ENCODE measurements at regions of chr11 and their contacts with region 1.

Region 1: GRCh38 chr11:102614485-102614884 is 10.6 kb downstream of the MMP20 start:
- DNase-seq: no peak
- H3K4me3 Mint-ChIP-seq: no peak overlapping the region
- H3K27ac Mint-ChIP-seq: no peak overlapping the region
- H3K4me1 Mint-ChIP-seq: peaks cover 8% of the 10 kb centered on the region
- H3K27me3 Mint-ChIP-seq: peaks cover 17% of the 10 kb centered on the region

Region 2: GRCh38 chr11:102287964-102288724 is 326.3 kb before region 1 on chr11:
- CTCF ChIA-PET with region 1: interaction called, 54 read pairs
- DNase-seq: peak; percentile 44
- H3K4me3 Mint-ChIP-seq: no peak overlapping the region
- H3K27ac Mint-ChIP-seq: no peak overlapping the region
- H3K4me1 Mint-ChIP-seq: peaks cover 32% of the 10 kb centered on the region
- H3K27me3 Mint-ChIP-seq: peaks cover 4% of the 10 kb centered on the region

Region 3: DNA sequence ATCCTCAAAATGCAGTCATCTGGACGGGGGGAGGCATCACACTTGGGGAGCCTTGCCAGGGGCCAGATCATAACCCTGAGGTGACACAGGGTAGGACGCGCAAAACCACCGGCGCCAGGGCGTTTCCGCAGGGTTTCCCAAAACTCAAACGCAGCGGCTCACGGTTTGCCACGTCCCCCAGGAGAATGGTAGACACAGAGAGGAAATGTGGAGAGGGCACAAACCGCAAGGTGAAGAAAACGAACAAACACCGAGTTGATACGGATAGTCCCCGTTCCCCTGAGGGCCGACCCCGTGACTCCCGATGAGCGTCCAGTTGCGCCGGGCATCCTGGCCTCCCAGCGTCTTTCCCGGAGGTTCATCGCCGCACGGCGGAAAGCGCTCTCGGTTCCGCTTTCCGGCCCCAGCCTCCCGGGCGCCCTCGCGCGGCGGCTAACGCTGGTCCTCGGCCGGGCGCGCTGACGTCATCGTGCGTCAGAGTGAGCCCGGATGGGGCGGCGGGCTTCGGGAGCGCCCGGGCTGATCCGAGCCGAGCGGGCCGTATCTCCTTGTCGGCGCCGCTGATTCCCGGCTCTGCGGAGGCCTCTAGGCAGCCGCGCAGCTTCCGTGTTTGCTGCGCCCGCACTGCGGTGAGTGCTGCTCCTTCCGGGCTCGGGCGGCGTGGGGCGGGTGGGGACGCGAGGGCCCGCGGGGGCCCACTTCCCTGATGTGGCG is 267.6 kb before region 1 on chr11 and contains the start of gene BIRC2:
- CTCF ChIA-PET with region 1: interaction called, 158 read pairs
- DNase-seq: peak; percentile 95
- H3K4me3 Mint-ChIP-seq: peak within 1 kb of the TSS; percentile 98
- H3K27ac Mint-ChIP-seq: peak within 1 kb of the TSS; percentile 96
- H3K4me1 Mint-ChIP-seq: peaks cover 43% of the 10 kb centered on the region
- H3K27me3 Mint-ChIP-seq: no peaks in the 10 kb centered on the region

Region 4: DNA sequence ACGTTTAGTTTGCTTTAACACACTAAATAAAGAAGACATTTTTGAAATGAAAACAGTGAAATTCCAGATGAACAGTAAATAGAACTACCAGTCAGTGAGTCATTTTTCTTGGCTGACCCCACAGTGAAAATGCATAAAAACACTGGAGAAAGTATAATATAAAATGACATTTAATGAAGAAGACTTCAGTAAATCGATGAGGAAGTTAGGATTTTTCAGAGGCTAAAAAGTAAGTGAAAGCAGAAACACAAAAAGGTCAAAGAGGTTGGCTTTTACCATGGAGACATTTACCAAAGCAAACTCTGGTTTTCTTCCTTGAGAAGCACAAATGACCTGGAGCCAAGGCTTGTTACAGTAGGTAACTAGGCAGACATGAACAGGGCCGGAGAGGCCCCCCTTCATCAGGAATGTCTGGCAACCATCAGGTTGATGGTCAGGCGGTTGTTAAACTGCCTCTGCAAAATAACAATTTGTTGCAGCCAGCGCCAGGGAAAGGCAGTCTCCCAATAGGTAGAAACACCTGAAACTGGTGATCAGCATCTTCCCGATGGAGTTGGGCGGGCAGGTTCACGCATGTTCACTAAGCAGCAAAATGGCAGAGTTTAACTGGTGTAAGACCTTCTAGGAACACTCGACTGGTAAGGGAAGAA is 145.2 kb before region 1 on chr11:
- CTCF ChIA-PET with region 1: no interaction called
- DNase-seq: no peak
- H3K4me3 Mint-ChIP-seq: peak overlapping the region; percentile 64
- H3K27ac Mint-ChIP-seq: no peak overlapping the region
- H3K4me1 Mint-ChIP-seq: peaks cover 100% of the 10 kb centered on the region
- H3K27me3 Mint-ChIP-seq: no peaks in the 10 kb centered on the region

Region 5: GRCh38 chr11:102495161-102496042 is 119.1 kb before region 1 on chr11:
- CTCF ChIA-PET with region 1: interaction called, 43 read pairs
- DNase-seq: peak; percentile 44
- H3K4me3 Mint-ChIP-seq: no peak overlapping the region
- H3K27ac Mint-ChIP-seq: no peak overlapping the region
- H3K4me1 Mint-ChIP-seq: peaks cover 19% of the 10 kb centered on the region
- H3K27me3 Mint-ChIP-seq: peaks cover 26% of the 10 kb centered on the region

Region 6: DNA sequence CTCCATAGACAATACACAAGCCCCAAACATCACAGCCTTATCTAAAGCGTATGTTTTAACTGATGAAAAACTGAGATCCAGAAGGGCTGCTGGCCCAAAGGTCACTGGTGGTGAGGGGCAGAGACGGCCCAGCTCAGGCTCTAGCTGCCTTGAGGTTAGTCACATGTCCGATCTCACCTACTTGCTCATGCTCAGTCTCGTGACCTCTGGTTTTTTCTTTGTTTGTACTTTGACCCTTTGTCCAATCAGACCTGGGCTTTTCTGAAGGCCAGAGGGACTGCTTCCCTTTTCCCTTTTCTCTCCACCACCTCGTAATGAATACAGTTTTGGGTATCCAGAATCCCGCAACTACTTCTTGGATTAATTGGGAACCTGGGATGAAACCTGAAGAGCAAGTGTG is 17.9 kb before region 1 on chr11:
- CTCF ChIA-PET with region 1: interaction called, 10 read pairs
- DNase-seq: no peak
- H3K4me3 Mint-ChIP-seq: no peak overlapping the region
- H3K27ac Mint-ChIP-seq: no peak overlapping the region
- H3K4me1 Mint-ChIP-seq: peaks cover 2% of the 10 kb centered on the region
- H3K27me3 Mint-ChIP-seq: peaks cover 3% of the 10 kb centered on the region

Region 7: GRCh38 chr11:102666331-102666957 is 52.0 kb after region 1 on chr11:
- CTCF ChIA-PET with region 1: interaction called, 24 read pairs
- DNase-seq: peak; percentile 33
- H3K4me3 Mint-ChIP-seq: no peak overlapping the region
- H3K27ac Mint-ChIP-seq: no peak overlapping the region
- H3K4me1 Mint-ChIP-seq: no peaks in the 10 kb centered on the region
- H3K27me3 Mint-ChIP-seq: peaks cover 4% of the 10 kb centered on the region

Region 8: GRCh38 chr11:102831489-102832440 is 217.3 kb after region 1 on chr11:
- CTCF ChIA-PET with region 1: no interaction called
- DNase-seq: peak; percentile 24
- H3K4me3 Mint-ChIP-seq: no peak overlapping the region
- H3K27ac Mint-ChIP-seq: no peak overlapping the region
- H3K4me1 Mint-ChIP-seq: no peaks in the 10 kb centered on the region
- H3K27me3 Mint-ChIP-seq: peaks cover 11% of the 10 kb centered on the region